Activated CD8-positive, alpha-beta T cell treated with anti-CD3 and anti-CD28 coated beads for 36 hours (primary cell): ENCODE measurements at regions of chr5 and their contacts with region 1.

Region 1: GRCh38 chr5:159156426-159157238 is 52.7 kb downstream of the RNF145 start:
- DNase-seq: peak; percentile 32
- ATAC-seq: peak; percentile 72
- H3K4me3 Mint-ChIP-seq: no peak overlapping the region
- H3K27ac Mint-ChIP-seq: peak overlapping the region; percentile 63
- H3K4me1 Mint-ChIP-seq: peaks cover 42% of the 10 kb centered on the region
- H3K27me3 Mint-ChIP-seq: no peaks in the 10 kb centered on the region
- CTCF ChIP-seq: peak; percentile 95

Region 2: GRCh38 chr5:159171274-159171673 is 14.6 kb after region 1 on chr5:
- CTCF ChIA-PET with region 1: interaction called, 24 read pairs
- POLR2A ChIA-PET with region 1: interaction called, 3 read pairs
- intact Hi-C with region 1: no loop called
- DNase-seq: no peak
- ATAC-seq: no peak
- H3K4me3 Mint-ChIP-seq: no peak overlapping the region
- H3K27ac Mint-ChIP-seq: peak overlapping the region; percentile 24
- H3K4me1 Mint-ChIP-seq: peaks cover 28% of the 10 kb centered on the region
- H3K27me3 Mint-ChIP-seq: no peaks in the 10 kb centered on the region
- CTCF ChIP-seq: no peak

Region 3: GRCh38 chr5:159198063-159199036 is 41.7 kb after region 1 on chr5:
- CTCF ChIA-PET with region 1: interaction called, 10 read pairs
- POLR2A ChIA-PET with region 1: no interaction called
- intact Hi-C with region 1: no loop called
- DNase-seq: no peak
- ATAC-seq: peak; percentile 87
- H3K4me3 Mint-ChIP-seq: no peak overlapping the region
- H3K27ac Mint-ChIP-seq: peak overlapping the region; percentile 76
- H3K4me1 Mint-ChIP-seq: peaks cover 71% of the 10 kb centered on the region
- H3K27me3 Mint-ChIP-seq: no peaks in the 10 kb centered on the region
- CTCF ChIP-seq: no peak

Region 4: DNA sequence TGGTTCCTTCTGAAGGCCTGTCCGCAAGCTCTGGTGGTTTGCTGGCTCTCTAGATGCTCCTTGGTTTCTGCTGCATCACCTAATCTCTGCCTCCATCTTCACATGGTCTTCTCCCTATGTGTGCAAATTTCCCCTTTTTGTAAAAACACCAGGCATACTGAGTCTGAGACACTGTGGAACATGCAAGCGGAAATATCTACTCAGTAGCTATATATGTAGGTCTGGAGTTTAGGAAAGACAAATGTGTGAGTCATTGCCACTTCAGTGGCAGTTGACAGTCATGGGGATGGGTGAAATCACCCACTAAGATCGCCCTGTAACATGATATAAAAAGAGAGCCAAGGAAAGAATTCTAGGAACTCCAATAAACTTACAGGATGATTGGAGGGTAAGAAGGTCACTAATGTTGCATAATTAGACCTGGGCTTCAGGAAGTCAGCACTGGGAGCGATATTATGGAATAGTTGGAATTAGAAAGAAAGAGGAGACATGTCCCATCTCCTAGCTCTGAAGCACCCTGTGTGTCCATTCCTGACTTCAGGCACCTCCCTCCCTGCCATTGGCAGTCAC is 83.8 kb after region 1 on chr5:
- CTCF ChIA-PET with region 1: interaction called, 14 read pairs
- POLR2A ChIA-PET with region 1: no interaction called
- intact Hi-C with region 1: no loop called
- DNase-seq: peak; percentile 20
- ATAC-seq: peak; percentile 84
- H3K4me3 Mint-ChIP-seq: no peak overlapping the region
- H3K27ac Mint-ChIP-seq: peak overlapping the region; percentile 3
- H3K4me1 Mint-ChIP-seq: peaks cover 39% of the 10 kb centered on the region
- H3K27me3 Mint-ChIP-seq: no peaks in the 10 kb centered on the region
- CTCF ChIP-seq: no peak

Region 5: DNA sequence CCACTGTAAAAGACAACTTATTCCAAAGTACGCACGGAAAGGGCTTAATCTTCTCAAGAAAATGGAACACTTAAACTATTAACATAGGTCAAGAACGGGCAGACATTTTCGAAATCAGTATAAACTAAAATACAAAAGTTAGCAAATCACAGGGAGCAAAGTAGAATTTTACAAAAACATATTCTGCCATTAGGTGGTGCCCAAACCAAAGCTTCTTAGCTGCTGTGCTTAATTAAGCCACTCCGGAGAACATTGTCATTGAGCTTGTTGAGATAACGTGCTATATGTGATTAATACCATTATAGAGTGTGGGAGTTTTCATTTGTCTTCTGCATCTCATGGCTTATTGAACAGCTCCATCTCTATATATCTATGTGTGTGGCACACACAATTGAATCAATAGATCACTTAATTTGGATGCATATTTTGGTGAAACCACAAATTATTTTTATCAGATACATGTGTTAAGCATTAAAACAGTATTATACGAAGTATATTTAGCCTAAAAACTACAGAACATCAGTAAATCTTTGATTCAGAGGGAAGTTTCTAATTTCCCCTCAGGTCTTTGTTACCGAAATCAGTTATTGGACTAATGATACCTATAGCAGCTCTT is 129.9 kb after region 1 on chr5:
- CTCF ChIA-PET with region 1: interaction called, 26 read pairs
- POLR2A ChIA-PET with region 1: no interaction called
- intact Hi-C with region 1: no loop called
- DNase-seq: no peak
- ATAC-seq: peak; percentile 45
- H3K4me3 Mint-ChIP-seq: no peak overlapping the region
- H3K27ac Mint-ChIP-seq: no peak overlapping the region
- H3K4me1 Mint-ChIP-seq: no peaks in the 10 kb centered on the region
- H3K27me3 Mint-ChIP-seq: no peaks in the 10 kb centered on the region
- CTCF ChIP-seq: peak; percentile 57

Region 6: DNA sequence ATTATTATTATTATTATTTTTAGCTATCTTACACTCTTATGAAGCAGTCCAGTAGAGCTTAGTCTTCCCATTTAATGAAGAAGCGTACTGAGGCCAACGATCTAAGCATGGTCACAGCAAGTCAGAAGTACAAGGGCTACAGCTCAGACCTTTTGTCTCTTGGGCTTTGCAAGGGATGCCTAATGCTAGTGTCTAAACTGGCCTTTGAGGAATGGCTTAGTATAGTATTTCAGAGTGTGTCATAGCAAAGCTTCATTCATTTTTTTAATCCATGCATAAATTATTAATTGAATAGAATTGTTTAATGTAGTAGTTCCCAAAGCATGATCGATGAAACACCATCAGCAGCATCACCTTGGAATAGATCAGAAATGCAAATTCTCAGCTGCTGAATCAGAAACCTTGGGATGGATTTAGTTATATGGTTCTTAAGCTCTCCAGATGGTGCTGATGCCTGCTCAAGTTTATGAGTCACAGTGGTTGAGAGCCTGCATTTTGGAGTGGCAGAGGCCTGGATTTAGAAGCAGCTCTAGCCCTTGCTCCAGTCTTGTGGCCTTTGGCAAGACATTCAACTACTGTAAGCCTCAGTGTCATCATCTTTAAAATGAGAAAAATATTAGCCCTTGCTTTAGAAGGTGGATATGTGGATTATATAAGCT is 167.6 kb after region 1 on chr5:
- CTCF ChIA-PET with region 1: interaction called, 14 read pairs
- POLR2A ChIA-PET with region 1: no interaction called
- intact Hi-C with region 1: no loop called
- DNase-seq: no peak
- ATAC-seq: no peak
- H3K4me3 Mint-ChIP-seq: no peak overlapping the region
- H3K27ac Mint-ChIP-seq: no peak overlapping the region
- H3K4me1 Mint-ChIP-seq: no peaks in the 10 kb centered on the region
- H3K27me3 Mint-ChIP-seq: peaks cover 5% of the 10 kb centered on the region
- CTCF ChIP-seq: no peak

Region 7: GRCh38 chr5:159377653-159378052 is 221.0 kb after region 1 on chr5:
- CTCF ChIA-PET with region 1: no interaction called
- POLR2A ChIA-PET with region 1: no interaction called
- intact Hi-C with region 1: no loop called
- DNase-seq: no peak
- ATAC-seq: no peak
- H3K4me3 Mint-ChIP-seq: no peak overlapping the region
- H3K27ac Mint-ChIP-seq: no peak overlapping the region
- H3K4me1 Mint-ChIP-seq: no peaks in the 10 kb centered on the region
- H3K27me3 Mint-ChIP-seq: peaks cover 5% of the 10 kb centered on the region
- CTCF ChIP-seq: no peak

Region 8: DNA sequence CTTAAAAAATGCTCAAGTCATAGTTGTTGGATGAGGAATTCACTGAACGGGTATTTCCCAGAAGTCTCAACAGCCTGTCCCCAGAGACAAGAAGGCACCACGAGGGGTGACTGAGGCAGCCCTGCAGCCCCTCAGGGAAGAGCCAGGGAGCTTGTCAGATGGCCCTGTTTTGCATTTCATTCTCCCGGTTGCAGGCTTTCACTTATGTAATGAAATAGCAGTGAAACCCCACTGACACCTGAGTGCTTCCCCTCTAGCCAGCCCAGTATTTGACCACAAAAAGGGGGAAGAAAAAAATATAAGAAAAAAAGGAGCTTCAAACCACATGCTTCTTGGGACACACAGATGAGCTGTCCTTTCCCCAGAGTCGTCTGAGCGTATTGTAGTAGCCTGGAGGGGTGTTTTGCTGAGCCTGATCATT is 249.0 kb after region 1 on chr5:
- CTCF ChIA-PET with region 1: no interaction called
- POLR2A ChIA-PET with region 1: no interaction called
- intact Hi-C with region 1: no loop called
- DNase-seq: no peak
- ATAC-seq: no peak
- H3K4me3 Mint-ChIP-seq: no peak overlapping the region
- H3K27ac Mint-ChIP-seq: no peak overlapping the region
- H3K4me1 Mint-ChIP-seq: peaks cover 22% of the 10 kb centered on the region
- H3K27me3 Mint-ChIP-seq: peaks cover 15% of the 10 kb centered on the region
- CTCF ChIP-seq: no peak